Panc1 (cell line): ENCODE measurements at regions of chr11 and their contacts with region 1.

Region 1: DNA sequence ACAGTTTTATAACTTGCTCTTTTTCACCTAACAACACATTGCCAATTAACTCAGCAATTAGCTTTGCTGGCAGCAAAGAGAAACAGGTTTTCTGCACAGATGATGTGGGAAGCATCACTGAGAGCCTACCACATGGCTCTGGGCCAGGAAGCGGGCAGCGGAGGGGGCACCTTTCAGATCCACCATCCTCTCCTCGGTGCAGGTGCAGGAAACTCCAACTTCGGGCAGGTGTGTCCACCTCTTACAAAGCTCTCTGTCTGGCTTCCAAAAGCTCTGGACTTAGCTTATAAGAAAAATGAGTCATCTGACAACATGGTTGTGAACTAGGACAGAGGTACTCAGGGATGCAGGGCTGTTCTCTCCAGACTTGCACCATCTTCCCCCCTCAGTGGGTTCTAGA is 77.0 kb downstream of the RPS6KA4 start:
- DNase-seq: no peak
- ATAC-seq: peak; percentile 23; the same call in 1 of the 2 replicates
- H3K4me3 ChIP-seq: no peak overlapping the region
- H3K27ac ChIP-seq: no peak overlapping the region
- H3K4me1 ChIP-seq: no peaks in the 10 kb centered on the region
- H3K27me3 ChIP-seq: no peaks in the 10 kb centered on the region
- CTCF ChIP-seq: no peak

Region 2: DNA sequence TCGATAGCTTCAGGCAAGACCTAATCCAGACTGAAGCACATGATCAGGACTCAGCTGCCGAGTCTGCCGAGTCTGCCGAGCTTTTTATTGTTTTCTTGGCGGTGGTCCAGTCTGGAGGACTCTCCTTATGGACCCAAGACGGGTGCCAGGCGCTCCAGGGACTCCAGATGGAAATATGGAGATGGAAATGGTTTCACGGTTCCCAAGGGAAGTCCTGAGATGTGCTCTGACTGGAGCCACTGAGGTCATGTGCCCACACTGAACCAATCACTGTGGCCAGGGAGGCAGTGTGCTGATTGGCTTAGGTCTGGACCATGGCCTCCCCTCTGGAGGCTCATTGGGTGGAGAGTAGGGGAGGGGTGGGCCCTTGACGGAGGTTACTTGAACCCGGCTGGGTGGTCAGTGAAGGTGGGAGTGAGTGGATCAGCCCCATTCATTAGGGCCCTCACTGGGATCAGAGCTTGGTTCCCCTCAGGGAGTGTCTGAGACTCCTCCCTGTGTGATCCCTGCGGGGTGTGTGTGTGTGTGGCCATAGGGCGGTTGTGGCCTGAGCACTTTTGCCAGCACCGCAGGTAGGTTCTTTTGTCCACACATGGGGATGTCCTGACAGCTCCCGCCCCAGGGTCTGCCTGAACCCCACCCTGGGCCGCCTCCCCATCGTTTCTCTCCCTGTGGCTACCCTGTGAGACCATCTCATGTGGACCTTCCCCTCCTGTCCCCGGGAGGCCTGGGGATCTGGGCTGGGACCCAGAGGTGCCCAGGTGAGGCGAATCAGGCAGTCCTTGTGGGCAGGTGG is 63.0 kb before region 1 on chr11:
- CTCF ChIA-PET with region 1: interaction called, 12 read pairs
- POLR2A ChIA-PET with region 1: no interaction called
- in situ Hi-C with region 1: no loop called
- intact Hi-C with region 1: no loop called
- DNase-seq: peak; percentile 25
- ATAC-seq: peak; percentile 90
- H3K4me3 ChIP-seq: peak overlapping the region; percentile 30 to 42
- H3K27ac ChIP-seq: no peak overlapping the region
- H3K4me1 ChIP-seq: peaks cover 5% of the 10 kb centered on the region; the same call in 1 of the 2 replicates
- H3K27me3 ChIP-seq: no peaks in the 10 kb centered on the region
- CTCF ChIP-seq: no peak